OCI-LY7 (cell line): ENCODE measurements at regions of chr18 and their contacts with region 1.

Region 1: GRCh38 chr18:2932247-2933181 is 80.4 kb downstream of the LPIN2 start:
- DNase-seq: peak; percentile 81
- H3K4me3 ChIP-seq: no peak overlapping the region
- H3K27ac ChIP-seq: no peak overlapping the region
- H3K4me1 ChIP-seq: peaks cover 6% of the 10 kb centered on the region
- CTCF ChIP-seq: peak; percentile 99

Region 2: DNA sequence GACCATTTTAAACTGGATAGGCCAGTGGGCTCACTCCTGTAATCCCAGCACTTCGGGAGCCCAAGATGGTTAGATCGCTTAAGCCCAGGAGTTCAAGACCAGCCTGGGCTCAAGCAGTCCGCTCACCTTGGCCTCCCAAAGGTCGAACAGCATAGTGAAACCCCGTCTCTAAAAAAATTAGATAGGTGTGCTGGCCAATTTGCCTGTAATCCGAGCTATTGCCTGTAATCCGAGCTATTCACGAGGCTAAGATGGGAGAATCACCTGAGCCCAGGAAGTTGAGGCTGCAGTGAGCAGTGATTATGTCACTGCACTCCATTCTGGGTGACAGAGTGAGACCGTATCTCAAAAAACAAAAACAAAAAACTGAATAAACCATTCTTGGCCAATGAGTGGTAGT is 138.4 kb before region 1 on chr18:
- CTCF ChIA-PET with region 1: no interaction called
- POLR2A ChIA-PET with region 1: no interaction called
- intact Hi-C with region 1: no loop called
- DNase-seq: no peak
- H3K4me3 ChIP-seq: no peak overlapping the region
- H3K27ac ChIP-seq: no peak overlapping the region
- H3K4me1 ChIP-seq: peaks cover 7% of the 10 kb centered on the region
- CTCF ChIP-seq: no peak

Region 3: DNA sequence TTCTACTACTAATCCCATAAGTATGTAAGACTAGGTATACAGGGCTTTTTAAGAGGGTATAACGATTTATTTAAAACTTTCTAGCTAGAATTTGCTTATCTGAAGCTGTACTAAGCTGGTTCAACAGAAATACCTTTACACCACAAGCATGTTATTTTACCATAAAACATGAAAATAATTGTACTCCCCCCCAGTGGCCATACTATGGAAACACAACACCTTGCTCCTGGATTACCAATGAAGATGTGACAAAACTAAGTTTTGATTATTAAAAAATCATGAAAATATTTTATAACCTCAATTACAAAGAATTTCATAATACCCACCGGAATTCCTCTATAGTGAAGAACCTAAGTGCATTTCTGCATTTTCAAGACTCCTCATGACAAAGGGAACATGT is 53.1 kb after region 1 on chr18:
- CTCF ChIA-PET with region 1: no interaction called
- POLR2A ChIA-PET with region 1: interaction called, 4 read pairs
- intact Hi-C with region 1: loop called (anchors 1 kb)
- DNase-seq: peak; percentile 71
- H3K4me3 ChIP-seq: no peak overlapping the region
- H3K27ac ChIP-seq: no peak overlapping the region
- H3K4me1 ChIP-seq: peaks cover 48% of the 10 kb centered on the region
- CTCF ChIP-seq: peak; percentile 94

Region 4: DNA sequence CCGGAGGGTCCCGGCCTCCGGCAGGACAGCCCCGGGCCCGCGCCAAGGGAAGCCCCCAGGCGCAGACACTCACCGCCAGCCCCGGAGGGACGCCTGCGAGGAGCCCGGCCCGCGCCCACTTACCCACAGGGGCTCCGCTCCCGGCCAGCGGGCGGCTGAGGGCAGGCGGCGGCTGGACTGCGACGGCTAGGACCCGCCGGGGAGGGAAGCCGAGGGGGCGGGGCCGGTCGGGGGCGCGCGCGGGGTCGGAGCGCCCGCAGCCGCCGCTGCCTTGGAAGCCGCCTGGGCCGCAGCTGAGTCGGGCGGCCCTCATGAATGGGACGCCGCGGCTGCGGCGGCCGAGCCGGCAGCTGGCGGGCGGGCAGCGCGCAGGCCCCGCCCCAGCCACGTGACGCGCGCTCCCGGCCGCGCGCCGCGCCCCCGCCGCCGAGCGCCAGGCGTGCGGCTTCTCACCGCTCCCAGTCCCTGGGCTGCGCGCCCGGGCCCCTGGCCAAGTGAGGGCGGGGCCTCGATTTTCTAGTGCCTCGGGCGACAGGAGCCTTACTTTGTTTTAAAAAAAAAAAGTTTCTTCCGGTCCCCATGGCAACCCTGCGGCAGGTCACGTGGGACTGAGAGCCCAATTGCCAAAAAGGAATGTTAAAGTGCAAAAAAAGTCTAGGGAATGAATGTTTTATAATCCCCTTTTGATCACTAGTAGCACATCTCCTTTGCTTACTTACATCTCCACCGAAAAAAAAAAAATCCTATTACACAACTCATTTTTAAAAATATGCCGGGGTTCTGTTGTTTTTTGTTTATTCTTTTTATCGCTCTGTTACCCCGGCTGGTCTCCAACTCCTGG is 80.7 kb after region 1 on chr18 and contains the start of gene LPIN2:
- CTCF ChIA-PET with region 1: no interaction called
- POLR2A ChIA-PET with region 1: no interaction called
- intact Hi-C with region 1: no loop called
- DNase-seq: peak; percentile 98
- H3K4me3 ChIP-seq: peak within 1 kb of the TSS; percentile 72
- H3K27ac ChIP-seq: peak within 1 kb of the TSS; percentile 50
- H3K4me1 ChIP-seq: peaks cover 51% of the 10 kb centered on the region
- CTCF ChIP-seq: no peak
- total RNA-seq, gene LPIN2: 18.7 and 20.1 TPM in 2 replicates

Region 5: GRCh38 chr18:3062798-3063680 is 130.5 kb after region 1 on chr18:
- CTCF ChIA-PET with region 1: no interaction called
- POLR2A ChIA-PET with region 1: no interaction called
- intact Hi-C with region 1: loop called (anchors 1 kb)
- DNase-seq: peak; percentile 72
- H3K4me3 ChIP-seq: no peak overlapping the region
- H3K27ac ChIP-seq: no peak overlapping the region
- H3K4me1 ChIP-seq: peaks cover 7% of the 10 kb centered on the region
- CTCF ChIP-seq: peak; percentile 93

Region 6: DNA sequence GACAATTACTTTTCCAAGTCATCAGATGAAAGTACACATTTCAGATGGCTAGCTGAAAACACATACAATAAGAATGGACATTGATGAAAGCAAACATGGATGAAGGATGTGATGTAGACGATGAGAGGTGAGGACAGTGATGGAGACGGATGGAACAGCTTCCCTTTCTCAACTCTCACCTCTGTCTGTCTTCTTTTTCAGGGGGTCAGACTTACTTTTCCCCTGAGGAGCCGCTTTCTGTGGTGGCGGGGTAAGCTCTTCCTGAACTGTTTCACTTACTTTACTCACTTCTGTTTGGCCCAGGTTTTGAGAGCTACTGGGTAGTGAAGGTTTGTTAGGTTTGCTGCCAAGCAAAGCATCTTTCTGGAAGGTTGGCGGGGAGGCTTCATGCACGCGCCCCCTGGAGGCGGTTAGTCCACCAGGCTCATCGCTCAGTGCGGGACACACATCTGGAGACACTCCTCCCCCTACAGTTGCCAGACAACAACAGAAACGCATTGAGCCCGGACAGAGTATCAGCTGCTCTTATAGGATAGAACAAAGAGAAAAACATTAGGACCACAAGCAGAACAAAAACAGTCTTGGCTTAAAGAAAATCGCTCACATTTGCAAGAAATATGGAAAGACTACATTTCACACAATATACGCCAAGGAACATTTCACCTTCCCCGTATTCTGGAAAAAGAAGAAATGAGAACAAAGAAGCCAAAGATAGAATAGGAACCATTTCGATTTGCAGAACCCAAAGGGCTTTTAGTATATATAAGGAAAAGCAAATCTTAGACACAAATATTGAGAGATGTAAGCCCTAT is 196.7 kb after region 1 on chr18:
- CTCF ChIA-PET with region 1: interaction called, 3 read pairs
- POLR2A ChIA-PET with region 1: no interaction called
- intact Hi-C with region 1: loop called (anchors 2 kb)
- DNase-seq: peak; percentile 90
- H3K4me3 ChIP-seq: peak overlapping the region; percentile 6
- H3K27ac ChIP-seq: no peak overlapping the region
- H3K4me1 ChIP-seq: peaks cover 10% of the 10 kb centered on the region
- CTCF ChIP-seq: peak; percentile 99

Region 7: DNA sequence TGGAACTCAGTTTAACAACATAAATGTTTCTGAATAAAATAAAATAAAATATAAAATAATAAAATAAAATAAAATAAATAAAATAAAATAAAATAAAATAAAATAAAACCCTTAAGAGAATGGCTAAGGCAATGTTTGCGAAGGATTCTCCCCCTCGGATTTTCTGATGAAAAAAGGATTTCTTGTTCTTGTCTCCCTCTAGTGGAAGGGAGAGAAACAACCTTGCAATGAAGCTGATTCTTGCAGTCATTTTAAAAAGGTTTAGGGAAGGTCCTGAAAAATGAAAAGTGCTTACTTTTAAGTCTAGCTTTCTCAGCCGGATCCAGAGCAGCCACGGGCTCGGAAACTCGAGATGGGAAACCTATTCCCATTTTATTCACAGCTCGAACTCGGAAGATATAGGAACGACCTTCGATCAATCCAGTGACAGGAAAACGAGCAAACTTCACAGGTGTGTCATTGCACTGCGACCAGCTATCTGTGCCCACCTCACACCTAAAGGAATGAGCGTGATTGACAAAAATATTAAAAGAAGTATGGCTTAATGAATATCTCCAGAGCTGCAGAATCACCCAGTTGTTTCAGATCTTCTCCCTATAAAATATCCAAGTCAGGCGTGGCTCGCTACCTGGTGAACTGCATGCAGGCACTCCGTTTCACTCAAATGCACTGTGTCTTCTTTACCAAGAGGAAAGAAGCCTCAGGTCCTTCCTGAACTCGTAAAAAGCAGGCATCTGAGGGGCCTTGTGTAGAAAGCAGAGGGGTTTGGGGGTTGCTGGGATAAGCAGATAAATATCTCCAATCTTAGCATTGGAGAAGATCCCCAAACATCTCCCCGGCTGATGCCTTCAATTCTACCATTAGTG is 219.1 kb after region 1 on chr18:
- CTCF ChIA-PET with region 1: no interaction called
- POLR2A ChIA-PET with region 1: no interaction called
- intact Hi-C with region 1: loop called (anchors 1 kb)
- DNase-seq: peak; percentile 59
- H3K4me3 ChIP-seq: no peak overlapping the region
- H3K27ac ChIP-seq: no peak overlapping the region
- H3K4me1 ChIP-seq: no peaks in the 10 kb centered on the region
- CTCF ChIP-seq: peak; percentile 83